Panc1 (cell line): ENCODE measurements at regions of chr1 and their contacts with region 1.

Region 1: DNA sequence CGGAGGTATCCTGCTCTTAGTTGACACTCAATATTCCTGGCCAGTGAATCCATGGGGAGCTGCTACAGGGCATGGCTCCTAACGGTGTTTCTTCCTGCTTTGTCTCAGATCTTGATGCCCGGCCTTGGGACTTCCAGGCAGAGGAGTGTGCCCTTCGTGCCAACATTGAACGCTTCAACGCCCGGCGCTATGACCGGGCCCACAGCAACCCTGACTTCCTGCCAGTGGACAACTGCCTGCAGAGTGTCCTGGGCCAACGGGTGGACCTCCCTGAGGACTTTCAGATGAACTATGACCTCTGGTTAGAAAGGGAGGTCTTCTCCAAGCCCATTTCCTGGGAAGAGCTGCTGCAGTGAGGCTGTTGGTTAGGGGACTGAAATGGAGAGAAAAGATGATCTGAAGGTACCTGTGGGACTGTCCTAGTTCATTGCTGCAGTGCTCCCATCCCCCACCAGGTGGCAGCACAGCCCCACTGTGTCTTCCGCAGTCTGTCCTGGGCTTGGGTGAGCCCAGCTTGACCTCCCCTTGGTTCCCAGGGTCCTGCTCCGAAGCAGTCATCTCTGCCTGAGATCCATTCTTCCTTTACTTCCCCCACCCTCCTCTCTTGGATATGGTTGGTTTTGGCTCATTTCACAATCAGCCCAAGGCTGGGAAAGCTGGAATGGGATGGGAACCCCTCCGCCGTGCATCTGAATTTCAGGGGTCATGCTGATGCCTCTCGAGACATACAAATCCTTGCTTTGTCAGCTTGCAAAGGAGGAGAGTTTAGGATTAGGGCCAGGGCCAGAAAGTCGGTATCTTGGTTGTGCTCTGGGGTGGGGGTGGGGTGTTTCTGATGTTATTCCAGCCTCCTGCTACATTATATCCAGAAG is 16.7 kb downstream of the ALX3 start:
- DNase-seq: peak; percentile 64
- ATAC-seq: peak; percentile 85
- H3K4me3 ChIP-seq: no peak overlapping the region
- H3K27ac ChIP-seq: no peak overlapping the region
- H3K4me1 ChIP-seq: no peaks in the 10 kb centered on the region
- H3K27me3 ChIP-seq: no peaks in the 10 kb centered on the region
- CTCF ChIP-seq: peak; percentile 92

Region 2: DNA sequence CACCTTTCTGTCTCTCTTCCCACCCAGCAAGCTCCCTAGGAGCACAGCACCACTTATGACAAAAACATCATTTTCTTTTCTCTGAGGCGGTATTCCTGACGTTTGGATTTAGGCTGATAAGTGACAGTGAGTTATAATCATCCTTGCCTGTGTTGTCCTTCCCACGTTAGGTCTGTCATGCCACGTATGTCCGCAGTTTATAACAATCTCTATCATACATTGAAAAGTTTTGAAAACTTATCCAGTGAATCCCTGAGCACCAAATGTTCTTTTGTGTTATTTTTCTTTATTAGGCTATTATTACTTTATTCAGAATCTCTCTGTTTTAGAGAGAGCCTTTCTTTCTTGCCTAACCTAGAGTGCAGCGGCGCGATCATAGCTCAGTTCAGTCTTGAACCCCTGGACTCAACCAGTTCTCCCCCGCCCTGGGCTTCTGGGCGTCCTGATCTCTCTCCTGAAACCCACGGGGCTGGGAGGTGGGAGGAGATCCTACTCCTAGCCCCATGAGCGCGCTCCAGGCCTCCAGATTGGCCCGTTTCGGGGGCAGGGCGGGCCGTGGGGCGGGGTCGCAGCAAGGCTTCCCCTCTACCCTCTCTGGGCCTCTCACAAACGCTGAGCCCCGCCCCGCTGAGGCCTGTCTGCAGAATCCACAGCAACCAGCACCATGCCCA is 386.2 kb before region 1 on chr1 and contains the start of gene GSTM2:
- CTCF ChIA-PET with region 1: no interaction called
- POLR2A ChIA-PET with region 1: no interaction called
- in situ Hi-C with region 1: no loop called
- intact Hi-C with region 1: no loop called
- DNase-seq: no peak
- ATAC-seq: peak; percentile 98
- H3K4me3 ChIP-seq: peak within 1 kb of the TSS; percentile 18 to 39
- H3K27ac ChIP-seq: peak within 1 kb of the TSS; percentile 74
- H3K4me1 ChIP-seq: no peaks in the 10 kb centered on the region
- H3K27me3 ChIP-seq: no peaks in the 10 kb centered on the region
- CTCF ChIP-seq: no peak
- total RNA-seq, gene GSTM2: 10.2 TPM

Region 3: GRCh38 chr1:109910123-109910962 is 143.4 kb before region 1 on chr1 and contains the start of gene CSF1:
- CTCF ChIA-PET with region 1: no interaction called
- POLR2A ChIA-PET with region 1: no interaction called
- in situ Hi-C with region 1: no loop called
- intact Hi-C with region 1: no loop called
- DNase-seq: no peak
- ATAC-seq: peak; percentile 72
- H3K4me3 ChIP-seq: peak within 1 kb of the TSS; percentile 70 to 83
- H3K27ac ChIP-seq: peak within 1 kb of the TSS; percentile 97
- H3K4me1 ChIP-seq: peaks cover 33% of the 10 kb centered on the region
- H3K27me3 ChIP-seq: no peaks in the 10 kb centered on the region
- CTCF ChIP-seq: no peak
- total RNA-seq, gene CSF1: 217 TPM

Region 4: DNA sequence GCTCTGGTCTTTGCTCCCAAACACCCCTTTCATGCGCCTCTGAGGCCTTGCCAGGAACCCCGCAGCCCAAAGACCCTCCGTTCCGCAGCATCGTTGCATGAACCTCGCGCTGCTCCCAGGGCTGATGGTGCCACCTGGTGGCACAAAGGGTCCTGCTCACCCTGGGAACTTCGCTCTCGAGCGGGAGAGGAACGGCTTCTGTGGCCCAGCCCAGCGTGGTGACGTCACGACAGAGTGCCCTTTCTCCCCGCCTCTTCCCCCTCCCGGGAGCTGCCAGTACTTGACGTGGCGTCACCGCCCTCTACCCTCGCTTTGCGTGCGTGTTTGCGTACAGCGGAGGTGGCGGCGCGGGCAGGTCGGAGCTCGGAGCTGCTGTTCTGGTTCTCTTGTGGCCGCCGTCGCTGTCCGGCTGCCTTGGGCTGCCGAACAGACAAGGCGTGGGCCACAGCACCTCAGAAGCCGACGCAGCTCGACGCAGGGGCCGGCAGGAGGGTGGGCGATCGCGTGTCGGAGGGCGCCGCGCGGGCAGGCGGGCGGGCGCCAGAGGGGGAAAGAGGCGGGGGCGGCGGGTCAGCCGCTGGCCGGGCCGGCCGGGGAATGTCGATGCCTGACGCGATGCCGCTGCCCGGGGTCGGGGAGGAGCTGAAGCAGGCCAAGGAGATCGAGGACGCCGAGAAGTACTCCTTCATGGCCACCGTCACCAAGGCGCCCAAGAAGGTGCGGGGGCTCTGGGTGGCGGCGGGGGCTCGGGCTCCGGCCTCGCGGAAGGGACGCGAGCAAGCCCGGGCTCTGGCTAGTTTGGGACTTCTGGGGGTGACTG is 69.1 kb before region 1 on chr1 and contains the start of gene AHCYL1:
- CTCF ChIA-PET with region 1: no interaction called
- POLR2A ChIA-PET with region 1: no interaction called
- in situ Hi-C with region 1: no loop called
- intact Hi-C with region 1: no loop called
- DNase-seq: peak; percentile 86
- ATAC-seq: peak; percentile 95
- H3K4me3 ChIP-seq: peak within 1 kb of the TSS; percentile 88 to 90
- H3K27ac ChIP-seq: peak within 1 kb of the TSS; percentile 95
- H3K4me1 ChIP-seq: peaks cover 52% of the 10 kb centered on the region
- H3K27me3 ChIP-seq: no peaks in the 10 kb centered on the region
- CTCF ChIP-seq: peak; percentile 92
- total RNA-seq, gene AHCYL1: 174 TPM

Region 5: GRCh38 chr1:110068646-110069403 is 15.0 kb after region 1 on chr1:
- CTCF ChIA-PET with region 1: interaction called, 13 read pairs
- POLR2A ChIA-PET with region 1: no interaction called
- in situ Hi-C with region 1: no loop called
- intact Hi-C with region 1: no loop called
- DNase-seq: no peak
- ATAC-seq: no peak
- H3K4me3 ChIP-seq: no peak overlapping the region
- H3K27ac ChIP-seq: no peak overlapping the region
- H3K4me1 ChIP-seq: no peaks in the 10 kb centered on the region
- H3K27me3 ChIP-seq: no peaks in the 10 kb centered on the region
- CTCF ChIP-seq: no peak

Region 6: DNA sequence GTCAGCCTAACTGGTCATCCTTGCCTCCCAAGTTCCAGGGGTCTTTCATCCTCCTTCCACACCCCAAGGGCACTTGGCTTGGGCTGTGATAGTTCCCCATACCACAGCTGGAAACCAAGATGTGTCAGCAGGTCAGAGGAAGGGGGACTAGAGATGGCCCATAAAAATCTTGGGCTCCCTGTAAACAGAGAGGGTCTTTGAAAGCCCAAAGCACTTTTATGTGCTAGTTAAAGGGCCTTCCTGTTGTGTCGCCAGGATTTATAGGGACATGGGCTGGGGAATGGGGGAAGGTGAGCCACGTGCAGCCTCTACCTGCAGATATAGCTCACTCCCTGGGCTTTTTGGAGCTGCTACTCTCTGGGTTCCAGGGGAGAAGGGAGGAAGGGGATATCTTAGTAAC is 46.5 kb after region 1 on chr1:
- CTCF ChIA-PET with region 1: interaction called, 3 read pairs
- POLR2A ChIA-PET with region 1: no interaction called
- in situ Hi-C with region 1: no loop called
- intact Hi-C with region 1: loop called (anchors 2 kb)
- DNase-seq: no peak
- ATAC-seq: no peak
- H3K4me3 ChIP-seq: no peak overlapping the region
- H3K27ac ChIP-seq: no peak overlapping the region
- H3K4me1 ChIP-seq: no peaks in the 10 kb centered on the region
- H3K27me3 ChIP-seq: no peaks in the 10 kb centered on the region
- CTCF ChIP-seq: no peak

Region 7: GRCh38 chr1:110136911-110137310 is 83.1 kb after region 1 on chr1:
- CTCF ChIA-PET with region 1: interaction called, 11 read pairs
- POLR2A ChIA-PET with region 1: no interaction called
- in situ Hi-C with region 1: no loop called
- intact Hi-C with region 1: no loop called
- DNase-seq: no peak
- ATAC-seq: no peak
- H3K4me3 ChIP-seq: no peak overlapping the region
- H3K27ac ChIP-seq: no peak overlapping the region
- H3K4me1 ChIP-seq: no peaks in the 10 kb centered on the region
- H3K27me3 ChIP-seq: peaks cover 5% of the 10 kb centered on the region; the same call in 1 of the 2 replicates
- CTCF ChIP-seq: no peak